Activated CD4-positive, alpha-beta memory T cell treated with anti-CD3 and anti-CD28 coated beads, Interleukin-2, amount 10 ng/mL, durations not matched to agents 7 days and 5 days (primary cell): ENCODE measurements at regions of chr11 and their contacts with region 1.

Region 1: DNA sequence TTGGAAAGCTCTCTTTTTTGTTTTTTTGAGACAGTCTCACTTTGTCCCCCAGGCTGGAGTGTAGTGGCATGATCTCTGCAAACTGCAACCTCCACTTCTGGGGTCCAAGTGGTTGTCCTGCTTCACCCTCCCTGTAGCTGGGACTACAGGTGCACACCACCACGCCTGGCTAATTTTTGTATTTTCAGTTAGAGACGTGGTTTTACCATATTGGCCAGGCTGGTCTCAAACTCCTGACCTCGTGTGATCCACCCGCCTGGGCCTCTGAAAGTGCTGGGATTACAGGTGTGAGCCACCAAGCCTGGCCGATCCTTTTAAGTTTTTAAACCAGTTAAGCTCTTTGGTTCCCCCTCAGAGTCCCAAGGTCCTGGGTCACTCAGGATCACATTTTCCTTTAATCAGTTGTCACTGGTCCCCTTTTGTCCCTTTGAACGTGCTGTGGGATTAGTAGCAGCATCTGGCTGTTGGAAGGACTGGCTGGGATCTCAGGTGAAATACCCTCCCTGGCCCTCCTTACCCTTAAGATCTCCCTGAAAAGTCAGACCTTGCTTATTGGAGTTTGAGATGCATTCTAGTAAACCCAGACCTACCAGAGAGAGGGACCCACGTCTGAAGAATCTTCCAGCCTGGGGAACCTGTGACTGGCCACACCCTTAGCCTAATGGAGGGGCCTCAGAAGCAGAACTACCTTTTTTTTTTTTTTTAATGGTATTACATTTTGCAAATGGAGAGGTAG is 8.1 kb downstream of the MALAT1 start:
- DNase-seq: peak; percentile 40
- H3K4me3 Mint-ChIP-seq: no peak overlapping the region
- H3K27ac Mint-ChIP-seq: peak overlapping the region; percentile 70
- H3K4me1 Mint-ChIP-seq: peaks cover 53% of the 10 kb centered on the region
- H3K27me3 Mint-ChIP-seq: no peaks in the 10 kb centered on the region

Region 2: GRCh38 chr11:65261591-65262380 is 245.2 kb before region 1 on chr11 and contains the start of gene POLA2:
- CTCF ChIA-PET with region 1: no interaction called
- POLR2A ChIA-PET with region 1: interaction called, 11 read pairs
- DNase-seq: peak; percentile 96
- H3K4me3 Mint-ChIP-seq: peak within 1 kb of the TSS; percentile 95
- H3K27ac Mint-ChIP-seq: peak within 1 kb of the TSS; percentile 92
- H3K4me1 Mint-ChIP-seq: peaks cover 60% of the 10 kb centered on the region
- H3K27me3 Mint-ChIP-seq: no peaks in the 10 kb centered on the region
- total RNA-seq, gene POLA2: 42.0 to 51.1 TPM

Region 3: DNA sequence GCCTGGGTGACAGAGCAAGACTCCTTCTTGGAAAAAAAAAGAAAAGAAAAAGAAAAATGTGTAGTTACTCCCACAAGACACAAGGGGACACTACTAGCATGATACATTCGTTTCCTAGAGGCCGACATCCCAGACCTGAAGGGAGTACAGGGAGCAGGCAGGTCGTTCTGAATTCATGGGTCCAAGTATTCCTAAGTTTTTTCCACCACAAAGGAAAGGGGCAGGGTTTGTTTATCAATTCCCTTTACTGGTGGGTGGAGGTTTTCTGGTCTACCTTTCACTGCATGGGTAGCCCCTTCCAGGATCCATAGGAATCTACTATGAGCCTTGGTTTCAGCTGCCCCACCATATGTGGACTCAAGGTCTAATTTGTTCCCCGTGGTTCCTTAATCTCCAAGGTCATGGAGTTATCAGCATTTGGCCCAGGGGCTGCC is 140.6 kb before region 1 on chr11:
- CTCF ChIA-PET with region 1: interaction called, 4 read pairs
- POLR2A ChIA-PET with region 1: interaction called, 11 read pairs
- DNase-seq: peak; percentile 38
- H3K4me3 Mint-ChIP-seq: no peak overlapping the region
- H3K27ac Mint-ChIP-seq: no peak overlapping the region
- H3K4me1 Mint-ChIP-seq: peaks cover 10% of the 10 kb centered on the region
- H3K27me3 Mint-ChIP-seq: peaks cover 2% of the 10 kb centered on the region

Region 4: DNA sequence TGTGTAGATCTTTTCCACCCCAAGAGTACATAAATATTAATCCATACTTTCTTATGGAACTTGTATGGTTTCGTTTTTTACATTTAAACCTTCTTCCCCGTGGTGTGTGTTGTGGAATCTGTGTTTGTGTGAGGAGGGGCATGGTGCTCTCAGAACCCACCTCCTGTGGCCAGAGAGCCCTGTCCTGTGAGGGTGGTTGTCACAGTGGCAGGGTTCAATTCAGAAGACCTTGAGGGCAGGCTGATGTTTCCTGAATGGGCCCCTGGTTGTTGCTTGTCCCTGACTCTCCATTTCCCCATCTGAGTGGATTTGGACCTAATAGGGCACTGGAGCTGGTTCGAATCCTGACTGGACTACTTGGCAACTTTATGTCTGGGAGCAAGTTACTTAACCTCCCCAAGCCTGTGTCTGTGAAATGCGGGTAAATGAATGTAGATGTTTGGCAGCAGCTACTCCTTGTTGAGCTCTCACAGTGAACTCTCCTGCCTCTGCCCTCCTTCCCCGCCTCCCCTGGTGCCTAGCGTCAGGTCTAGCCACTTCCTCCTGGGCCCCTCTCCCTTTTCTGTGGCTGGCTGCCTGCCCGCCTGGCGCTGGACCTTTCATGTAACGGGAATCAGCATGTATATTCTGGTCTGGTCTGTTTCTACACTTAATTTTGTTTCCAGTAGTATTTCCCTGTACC is 77.1 kb before region 1 on chr11:
- CTCF ChIA-PET with region 1: interaction called, 447 read pairs
- POLR2A ChIA-PET with region 1: interaction called, 6,840 read pairs
- DNase-seq: peak; percentile 67
- H3K4me3 Mint-ChIP-seq: peak overlapping the region; percentile 97
- H3K27ac Mint-ChIP-seq: peak overlapping the region; percentile 99
- H3K4me1 Mint-ChIP-seq: peaks cover 81% of the 10 kb centered on the region
- H3K27me3 Mint-ChIP-seq: no peaks in the 10 kb centered on the region

Region 5: DNA sequence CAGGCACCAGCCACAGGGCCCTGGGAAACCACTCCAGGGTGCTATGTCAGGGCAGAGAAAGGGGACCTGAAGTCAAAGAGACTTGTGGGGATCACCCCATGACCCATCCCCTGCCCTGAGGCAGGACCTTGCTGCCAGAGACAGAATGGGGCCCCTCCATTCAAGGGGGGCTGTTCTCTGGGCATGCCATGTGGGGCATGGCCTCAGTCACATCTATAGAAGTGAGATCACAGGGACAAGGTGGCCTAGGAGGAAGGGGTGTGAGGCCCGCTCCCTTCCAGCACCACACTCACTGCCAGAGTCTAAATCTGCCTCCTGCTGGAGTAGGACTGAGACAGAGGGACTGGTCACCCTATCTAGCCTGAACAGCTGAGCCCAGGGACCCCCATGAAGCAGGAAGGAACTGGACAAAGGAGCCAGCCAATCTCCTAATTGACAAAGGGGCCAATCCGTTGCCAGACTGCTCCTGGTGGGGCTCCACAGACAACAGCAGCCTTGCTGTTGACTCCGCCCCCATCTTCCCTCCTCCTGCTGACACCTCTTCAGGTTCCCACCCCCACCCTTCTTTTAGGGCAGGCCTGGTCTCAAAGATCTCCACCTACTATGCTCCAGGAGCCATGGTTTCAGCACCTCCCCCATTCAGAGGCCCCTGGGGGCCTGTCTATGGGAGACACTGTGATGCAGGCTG is 58.4 kb before region 1 on chr11:
- CTCF ChIA-PET with region 1: interaction called, 3 read pairs
- POLR2A ChIA-PET with region 1: interaction called, 15 read pairs
- DNase-seq: no peak
- H3K4me3 Mint-ChIP-seq: peak overlapping the region; percentile 10
- H3K27ac Mint-ChIP-seq: peak overlapping the region; percentile 55
- H3K4me1 Mint-ChIP-seq: peaks cover 8% of the 10 kb centered on the region
- H3K27me3 Mint-ChIP-seq: no peaks in the 10 kb centered on the region

Region 6: GRCh38 chr11:65524741-65525545 is 18.0 kb after region 1 on chr11 and contains the start of gene SCYL1:
- CTCF ChIA-PET with region 1: interaction called, 4 read pairs
- POLR2A ChIA-PET with region 1: interaction called, 33 read pairs
- DNase-seq: peak; percentile 86
- H3K4me3 Mint-ChIP-seq: peak within 1 kb of the TSS; percentile 80
- H3K27ac Mint-ChIP-seq: peak within 1 kb of the TSS; percentile 83
- H3K4me1 Mint-ChIP-seq: peaks cover 56% of the 10 kb centered on the region
- H3K27me3 Mint-ChIP-seq: no peaks in the 10 kb centered on the region
- total RNA-seq, gene SCYL1: 56.9 to 58.5 TPM

Region 7: DNA sequence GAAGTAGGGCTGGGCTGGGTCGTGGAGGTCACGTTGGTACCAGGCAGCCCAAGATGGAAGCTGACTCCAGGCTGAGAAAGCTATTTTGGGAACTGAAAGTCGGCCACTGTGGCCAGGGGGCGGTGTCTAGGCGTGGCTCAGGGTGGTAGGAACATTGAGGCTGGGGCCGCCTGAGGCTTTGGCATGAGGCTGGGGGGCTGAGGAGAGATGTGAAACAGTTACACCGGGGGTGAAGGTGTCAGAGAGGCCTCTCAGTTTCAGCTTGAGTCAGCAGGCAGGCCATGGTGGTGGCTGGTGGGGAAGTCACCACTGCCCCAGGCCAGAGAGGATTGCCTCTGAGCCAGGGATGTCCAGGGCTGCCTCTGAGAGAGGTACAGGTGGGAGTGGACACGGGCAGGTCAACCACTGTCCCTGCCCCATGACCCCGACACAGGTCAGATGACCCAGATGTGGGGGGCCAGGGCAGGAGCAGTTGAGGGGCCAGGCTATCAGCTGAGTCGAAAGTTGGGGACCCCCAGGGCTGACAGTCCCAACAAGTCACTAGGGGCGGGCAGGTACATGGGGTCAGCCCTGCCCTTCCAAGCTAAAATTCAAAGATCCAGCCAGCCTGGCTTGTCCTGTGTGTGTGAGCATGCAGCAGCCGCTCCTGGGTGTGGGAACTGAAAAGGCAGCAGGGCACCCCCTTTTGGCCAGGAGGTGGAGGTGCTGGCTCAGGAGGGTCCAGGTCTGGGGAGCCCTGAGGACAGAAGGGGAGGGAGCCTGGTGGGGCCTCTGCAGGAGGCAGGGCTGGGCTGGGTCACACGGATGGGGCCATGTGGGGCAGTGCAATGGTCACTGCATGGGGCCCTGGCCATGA is 81.5 kb after region 1 on chr11:
- CTCF ChIA-PET with region 1: interaction called, 3 read pairs
- POLR2A ChIA-PET with region 1: interaction called, 11 read pairs
- DNase-seq: peak; percentile 83
- H3K4me3 Mint-ChIP-seq: peak overlapping the region; percentile 44
- H3K27ac Mint-ChIP-seq: peak overlapping the region; percentile 95
- H3K4me1 Mint-ChIP-seq: peaks cover 43% of the 10 kb centered on the region
- H3K27me3 Mint-ChIP-seq: no peaks in the 10 kb centered on the region